Heart left ventricle (tissue), 16 donors: ENCODE measurements at regions of chr20 and their contacts with region 1.

Region 1: DNA sequence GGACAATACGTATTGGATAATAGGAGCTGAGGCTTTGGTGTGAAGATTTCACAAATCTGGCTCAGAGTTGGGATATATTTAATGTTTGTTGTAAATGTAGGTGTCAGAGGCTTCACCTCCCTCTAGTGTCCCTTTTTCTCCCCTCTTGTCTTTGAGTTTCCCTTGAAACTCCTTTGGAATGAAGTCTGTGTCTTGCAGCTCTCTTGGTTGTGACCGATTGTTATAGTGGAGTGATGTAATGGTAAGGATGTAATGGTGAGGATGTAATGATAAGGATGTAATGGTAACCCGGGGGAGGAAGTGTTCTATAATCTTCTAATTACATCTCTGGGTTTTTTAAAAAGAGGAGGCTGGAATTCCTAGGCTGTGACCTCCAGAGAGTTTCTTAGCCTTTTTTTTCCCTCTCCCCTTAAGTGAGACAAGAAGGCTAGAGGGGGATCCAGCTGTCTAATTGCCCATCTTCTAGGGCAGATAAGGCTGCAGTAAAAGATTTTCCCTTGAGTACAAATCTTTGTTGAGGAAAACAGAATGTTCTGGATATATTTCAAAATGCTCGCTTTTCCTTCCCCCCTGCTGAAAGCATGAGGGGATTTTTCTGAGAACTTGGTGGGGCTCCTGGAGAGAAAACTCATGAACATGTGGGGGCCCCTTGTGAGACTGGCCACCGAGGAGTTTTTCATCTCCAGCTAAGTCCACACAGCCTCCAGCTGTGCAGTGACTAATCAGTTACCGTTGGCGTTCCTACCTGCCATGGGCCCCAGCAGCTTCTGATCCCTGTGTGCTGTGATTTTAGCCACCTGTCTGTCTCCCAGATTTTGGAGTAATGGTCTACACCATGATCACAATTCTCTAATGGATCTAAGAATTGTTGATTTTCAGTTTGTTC is 156.6 kb upstream of the PMEPA1 start:
- DNase-seq: no peak
- ATAC-seq: peak in 3 of 4 donors; percentile 30 to 57 (median 42)
- H3K4me3 ChIP-seq: no peak overlapping the region
- H3K27ac ChIP-seq: no peak overlapping the region
- H3K4me1 ChIP-seq: peaks cover 0 to 10% (median 0%) of the 10 kb centered on the region in 12 donors
- H3K27me3 ChIP-seq: peaks cover 0 to 15% (median 0%) of the 10 kb centered on the region in 9 donors
- CTCF ChIP-seq: no peak
- POLR2A ChIP-seq: no peak

Region 2: DNA sequence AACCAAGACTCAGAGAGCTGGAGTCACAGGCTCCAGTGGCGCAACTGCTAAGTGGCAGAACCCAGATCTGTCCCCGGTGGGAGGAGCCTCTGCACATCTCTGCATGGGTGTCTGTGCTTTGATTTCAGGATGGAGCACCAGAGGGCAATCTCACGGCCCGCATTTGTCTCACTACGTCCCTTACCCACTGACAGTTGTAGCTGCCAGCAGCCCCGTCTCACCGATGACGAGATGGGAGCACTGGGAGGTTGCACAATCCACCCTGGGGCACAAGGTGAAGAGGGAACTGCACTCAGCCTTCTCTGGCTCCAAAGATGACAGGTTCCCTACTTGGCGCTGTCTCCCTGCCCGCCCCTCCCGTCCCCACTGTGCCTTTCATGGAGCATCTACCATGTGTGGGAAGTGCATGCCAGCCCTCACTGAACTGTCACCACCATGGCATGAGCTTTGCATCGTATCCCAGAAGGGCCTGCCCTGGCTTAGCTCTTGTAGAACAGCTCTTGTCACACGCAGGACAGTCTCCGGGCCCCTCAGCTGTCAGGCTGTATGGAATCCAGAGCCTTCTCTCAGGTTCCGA is 56.8 kb before region 1 on chr20:
- intact Hi-C with region 1: loop called in 1 of 10 experiments (anchors 10 kb)
- DNase-seq: peak in 2 of 5 donors; percentile 58 to 67
- ATAC-seq: peak; percentile 40 to 75 (median 51)
- H3K4me3 ChIP-seq: no peak overlapping the region
- H3K27ac ChIP-seq: no peak overlapping the region
- H3K4me1 ChIP-seq: peaks cover 0 to 13% (median 0%) of the 10 kb centered on the region in 12 donors
- H3K27me3 ChIP-seq: no peaks in the 10 kb centered on the region
- CTCF ChIP-seq: no peak
- POLR2A ChIP-seq: no peak

Region 3: DNA sequence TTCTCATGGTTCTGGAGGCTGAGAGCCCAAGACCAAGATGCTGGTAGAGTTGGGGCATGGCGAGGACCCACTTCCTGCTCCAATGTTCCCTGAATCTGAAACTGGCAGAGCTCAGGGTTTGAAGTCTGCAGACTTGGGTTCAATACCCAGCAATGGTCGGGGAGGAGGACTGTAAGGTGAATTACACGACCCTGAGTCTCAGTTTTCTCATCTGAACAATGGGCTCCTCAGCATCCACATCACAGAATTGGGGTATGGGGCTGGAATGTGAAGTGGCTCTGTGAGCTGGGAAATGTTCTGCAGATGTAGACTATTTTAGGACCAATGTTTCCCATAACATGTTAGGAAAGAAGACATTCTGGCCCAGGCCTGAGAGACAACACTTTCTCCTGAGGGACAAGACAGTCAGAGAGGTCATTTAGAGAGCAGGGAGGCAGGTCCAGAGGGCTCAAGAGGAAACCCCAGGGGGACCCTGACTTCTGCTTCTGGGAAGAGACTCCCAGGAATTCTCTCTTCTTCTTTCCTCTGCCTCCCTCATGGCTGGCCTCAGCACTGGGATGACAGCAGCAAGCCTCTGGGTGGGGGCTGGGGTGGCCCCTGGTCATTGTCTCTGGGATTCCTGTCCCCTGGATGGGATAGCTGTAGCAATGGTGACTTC is 15.3 kb before region 1 on chr20:
- intact Hi-C with region 1: loop called in 1 of 10 experiments (anchors 2 kb)
- DNase-seq: peak; percentile 57 to 77 (median 72)
- ATAC-seq: peak; percentile 53 to 70 (median 63)
- H3K4me3 ChIP-seq: no peak overlapping the region
- H3K27ac ChIP-seq: peak overlapping the region in 1 of 12 donors; percentile 30
- H3K4me1 ChIP-seq: peaks cover 0 to 6% (median 0%) of the 10 kb centered on the region in 12 donors
- H3K27me3 ChIP-seq: no peaks in the 10 kb centered on the region
- CTCF ChIP-seq: no peak
- POLR2A ChIP-seq: no peak

Region 4: DNA sequence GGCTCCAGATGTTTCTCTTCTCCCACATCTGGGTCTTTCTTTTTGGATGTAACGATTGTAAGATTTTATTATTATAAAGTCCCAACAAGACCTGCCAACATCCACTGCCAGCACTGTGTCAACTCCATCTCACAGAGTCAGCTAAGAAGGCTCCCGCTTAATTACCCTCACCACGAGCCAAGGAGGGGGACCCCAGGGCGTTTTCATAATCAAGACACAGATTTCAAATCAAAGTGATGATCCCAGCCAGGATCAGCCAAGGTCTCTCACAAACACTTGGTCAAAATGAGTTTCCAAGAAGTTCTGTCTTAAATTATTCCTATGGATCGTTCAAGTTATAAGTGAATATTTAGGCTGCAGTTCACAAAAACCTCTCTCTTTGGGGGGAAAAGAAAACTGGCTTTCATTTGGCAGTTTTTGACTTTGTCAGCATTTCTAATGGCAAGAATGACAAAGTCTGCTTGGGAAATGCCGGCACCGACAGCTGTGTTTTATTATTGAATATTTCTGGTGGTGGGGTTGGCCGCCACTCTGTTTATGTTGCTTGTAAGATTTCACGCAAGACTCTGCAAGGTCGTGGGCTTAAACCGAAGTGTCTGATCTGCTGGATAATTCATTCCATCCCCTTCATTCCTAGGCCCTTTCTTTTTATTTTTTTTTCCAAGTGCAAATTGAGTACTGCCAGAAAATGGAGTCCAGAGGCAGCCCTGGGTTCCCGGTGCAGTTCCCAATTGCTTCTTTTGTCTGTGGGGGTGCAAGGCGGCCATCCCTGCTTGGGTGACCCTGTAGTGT is 13.5 kb after region 1 on chr20:
- intact Hi-C with region 1: loop called in 1 of 10 experiments (anchors 1 kb)
- DNase-seq: peak in 3 of 5 donors; percentile 37 to 62 (median 39)
- ATAC-seq: peak in 2 of 4 donors; percentile 54 to 62
- H3K4me3 ChIP-seq: no peak overlapping the region
- H3K27ac ChIP-seq: peak overlapping the region in 6 of 12 donors; percentile 9 to 73 (median 45)
- H3K4me1 ChIP-seq: peaks cover 0 to 19% (median 5%) of the 10 kb centered on the region in 12 donors
- H3K27me3 ChIP-seq: no peaks in the 10 kb centered on the region
- CTCF ChIP-seq: no peak
- POLR2A ChIP-seq: no peak